Activated T-helper 1 cell treated with anti-CD3 and anti-CD28 coated beads, Interleukin-12 subunit alpha, Interleukin-12 subunit beta, Interleukin-2, Interleukin-4 antibody, amounts not matched to agents 30 ng/mL and 10 ng/mL and 1 ng/mL, durations not matched to agents 14 hours and 24 hours and 36 hours (primary cell): ENCODE measurements at regions of chr1 and their contacts with region 1.

Region 1: GRCh38 chr1:153922972-153923925 is at the start of gene GATAD2B:
- DNase-seq: peak; percentile 99
- H3K4me3 Mint-ChIP-seq: peak within 1 kb of the TSS; percentile 97
- H3K27ac Mint-ChIP-seq: peak within 1 kb of the TSS; percentile 92
- H3K4me1 Mint-ChIP-seq: peaks cover 53% of the 10 kb centered on the region
- H3K27me3 Mint-ChIP-seq: peaks cover 2% of the 10 kb centered on the region
- total RNA-seq, gene GATAD2B: 69.1 and 70.4 TPM in 2 replicates

Region 2: DNA sequence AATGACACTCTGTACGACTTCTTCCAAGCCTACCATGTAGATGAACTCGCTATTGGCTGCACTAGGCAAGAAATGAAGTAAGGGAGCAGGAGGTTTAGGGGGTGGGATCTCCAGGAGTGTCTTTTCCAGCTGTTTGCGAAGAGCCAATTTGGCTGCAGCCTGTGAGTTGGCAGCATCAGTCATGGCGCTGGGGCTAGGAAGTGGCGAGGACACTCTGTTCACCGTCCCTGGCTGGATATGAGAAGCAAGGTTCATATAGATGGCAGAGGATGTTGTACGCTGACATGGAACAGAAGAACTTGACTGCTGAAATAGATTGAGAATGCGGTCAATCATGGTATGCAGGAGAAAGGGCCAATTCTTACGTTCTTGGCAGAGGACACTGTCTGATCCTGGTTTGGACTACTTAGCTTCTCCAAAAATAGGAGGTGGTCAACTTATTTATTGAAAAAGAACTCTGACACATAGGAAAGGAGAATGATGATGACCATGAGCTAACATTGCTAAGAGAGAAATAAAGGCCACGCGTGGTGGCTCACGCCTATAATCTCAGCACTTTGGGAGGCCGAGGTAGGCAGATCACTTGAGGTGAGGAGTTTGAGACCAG is 106.9 kb before region 1 on chr1:
- intact Hi-C with region 1: loop called (anchors 1 kb)
- DNase-seq: no peak
- H3K4me3 Mint-ChIP-seq: no peak overlapping the region
- H3K27ac Mint-ChIP-seq: no peak overlapping the region
- H3K4me1 Mint-ChIP-seq: no peaks in the 10 kb centered on the region
- H3K27me3 Mint-ChIP-seq: no peaks in the 10 kb centered on the region

Region 3: GRCh38 chr1:153856763-153857162 is 66.5 kb before region 1 on chr1:
- intact Hi-C with region 1: no loop called
- DNase-seq: no peak
- H3K4me3 Mint-ChIP-seq: no peak overlapping the region
- H3K27ac Mint-ChIP-seq: no peak overlapping the region
- H3K4me1 Mint-ChIP-seq: peaks cover 10% of the 10 kb centered on the region
- H3K27me3 Mint-ChIP-seq: no peaks in the 10 kb centered on the region

Region 4: GRCh38 chr1:153888533-153888932 is 34.7 kb before region 1 on chr1:
- intact Hi-C with region 1: loop called (anchors 2 kb)
- DNase-seq: no peak
- H3K4me3 Mint-ChIP-seq: no peak overlapping the region
- H3K27ac Mint-ChIP-seq: peak overlapping the region; percentile 81
- H3K4me1 Mint-ChIP-seq: peaks cover 22% of the 10 kb centered on the region
- H3K27me3 Mint-ChIP-seq: no peaks in the 10 kb centered on the region

Region 5: GRCh38 chr1:153958111-153958960 is 35.1 kb after region 1 on chr1 and contains the start of gene CRTC2:
- intact Hi-C with region 1: loop called (anchors 1 kb)
- DNase-seq: peak; percentile 96
- H3K4me3 Mint-ChIP-seq: peak within 1 kb of the TSS; percentile 97
- H3K27ac Mint-ChIP-seq: peak within 1 kb of the TSS; percentile 81
- H3K4me1 Mint-ChIP-seq: peaks cover 65% of the 10 kb centered on the region
- H3K27me3 Mint-ChIP-seq: no peaks in the 10 kb centered on the region
- total RNA-seq, gene CRTC2: 62.8 and 76.4 TPM in 2 replicates

Region 6: GRCh38 chr1:153977250-153978240 is 54.3 kb after region 1 on chr1 and contains the start of gene JTB:
- intact Hi-C with region 1: loop called (anchors 2 kb)
- DNase-seq: peak; percentile 80
- H3K4me3 Mint-ChIP-seq: peak within 1 kb of the TSS; percentile 94
- H3K27ac Mint-ChIP-seq: peak within 1 kb of the TSS; percentile 95
- H3K4me1 Mint-ChIP-seq: peaks cover 33% of the 10 kb centered on the region
- H3K27me3 Mint-ChIP-seq: no peaks in the 10 kb centered on the region
- total RNA-seq, gene JTB: 198 and 213 TPM in 2 replicates

Region 7: GRCh38 chr1:154220071-154220969 is 297.1 kb after region 1 on chr1 and contains the start of gene UBAP2L:
- intact Hi-C with region 1: loop called (anchors 2 kb)
- DNase-seq: peak; percentile 99
- H3K4me3 Mint-ChIP-seq: peak within 1 kb of the TSS; percentile 97
- H3K27ac Mint-ChIP-seq: peak within 1 kb of the TSS; percentile 99
- H3K4me1 Mint-ChIP-seq: peaks cover 62% of the 10 kb centered on the region
- H3K27me3 Mint-ChIP-seq: no peaks in the 10 kb centered on the region
- total RNA-seq, gene UBAP2L: 258 and 284 TPM in 2 replicates